H1 (cell line): ENCODE measurements at regions of chr2 and their contacts with region 1.

Region 1: GRCh38 chr2:104944495-104944894 is 90.6 kb downstream of the POU3F3 start:
- DNase-seq: peak in 1 of 2 experiments; percentile 61
- H3K4me3 ChIP-seq: no peak overlapping the region
- H3K27ac ChIP-seq: no peak overlapping the region
- H3K4me1 ChIP-seq: peaks cover 0 to 3% (median 0%) of the 10 kb centered on the region in 4 experiments; a peak in 1 of 7 replicates
- H3K27me3 ChIP-seq: peaks cover 0 to 1% (median 0%) of the 10 kb centered on the region in 4 experiments; a peak in 1 of 7 replicates
- CTCF ChIP-seq: peak in 2 of 3 experiments; percentile 64 to 74; a peak in 3 of 4 replicates
- EP300 ChIP-seq: no peak
- POLR2A ChIP-seq: no peak
- RAD21 ChIP-seq: peak; percentile 95 to 96

Region 2: GRCh38 chr2:103959174-103960128 is 985.0 kb before region 1 on chr2:
- CTCF ChIA-PET with region 1: interaction called, 10 read pairs
- POLR2A ChIA-PET with region 1: no interaction called
- DNase-seq: peak; percentile 21 to 49
- H3K4me3 ChIP-seq: no peak overlapping the region
- H3K27ac ChIP-seq: no peak overlapping the region
- H3K4me1 ChIP-seq: no peaks in the 10 kb centered on the region
- H3K27me3 ChIP-seq: no peaks in the 10 kb centered on the region
- CTCF ChIP-seq: peak; percentile 74 to 85 (median 77)
- EP300 ChIP-seq: no peak
- POLR2A ChIP-seq: no peak
- RAD21 ChIP-seq: peak; percentile 88 to 91

Region 3: DNA sequence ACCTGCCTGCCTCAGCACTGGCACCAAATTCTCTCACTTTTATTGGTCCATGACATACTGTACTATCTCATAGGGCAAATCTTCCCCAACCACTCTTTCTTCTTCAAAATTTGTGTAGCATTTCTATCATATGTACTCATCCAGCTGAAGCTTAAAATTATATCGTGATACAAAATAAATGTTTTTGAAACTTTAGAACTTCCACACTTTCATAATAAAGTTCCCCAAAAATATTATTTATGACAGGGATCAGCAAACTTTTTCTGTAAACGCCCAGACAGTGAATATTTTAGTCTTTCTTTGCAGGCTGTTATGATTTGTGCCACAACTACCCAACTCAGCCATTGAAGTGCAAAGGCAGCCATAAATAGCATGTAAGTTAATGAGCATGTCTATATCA is 166.8 kb before region 1 on chr2:
- CTCF ChIA-PET with region 1: no interaction called
- POLR2A ChIA-PET with region 1: no interaction called
- DNase-seq: no peak
- H3K4me3 ChIP-seq: no peak overlapping the region
- H3K27ac ChIP-seq: no peak overlapping the region
- H3K4me1 ChIP-seq: no peaks in the 10 kb centered on the region
- H3K27me3 ChIP-seq: no peaks in the 10 kb centered on the region
- CTCF ChIP-seq: no peak
- EP300 ChIP-seq: no peak
- POLR2A ChIP-seq: no peak
- RAD21 ChIP-seq: no peak

Region 4: GRCh38 chr2:104872866-104873688 is 71.4 kb before region 1 on chr2:
- CTCF ChIA-PET with region 1: interaction called, 38 read pairs
- POLR2A ChIA-PET with region 1: no interaction called
- DNase-seq: peak in 1 of 2 experiments; percentile 88
- H3K4me3 ChIP-seq: peak overlapping the region; percentile 48 to 75 (median 56)
- H3K27ac ChIP-seq: no peak overlapping the region
- H3K4me1 ChIP-seq: peaks cover 0 to 13% (median 4%) of the 10 kb centered on the region in 4 experiments; a peak in 5 of 7 replicates
- H3K27me3 ChIP-seq: peaks cover 43 to 80% (median 67%) of the 10 kb centered on the region in 4 experiments
- CTCF ChIP-seq: peak; percentile 62 to 76 (median 70)
- EP300 ChIP-seq: no peak
- POLR2A ChIP-seq: no peak
- RAD21 ChIP-seq: peak; percentile 76 to 80

Region 5: GRCh38 chr2:104965900-104966299 is 21.4 kb after region 1 on chr2:
- CTCF ChIA-PET with region 1: interaction called, 10 read pairs
- POLR2A ChIA-PET with region 1: no interaction called
- DNase-seq: no peak
- H3K4me3 ChIP-seq: no peak overlapping the region
- H3K27ac ChIP-seq: no peak overlapping the region
- H3K4me1 ChIP-seq: peaks cover 0 to 7% (median 2%) of the 10 kb centered on the region in 4 experiments; a peak in 5 of 7 replicates
- H3K27me3 ChIP-seq: no peaks in the 10 kb centered on the region
- CTCF ChIP-seq: peak in 1 of 3 experiments; percentile 59; a peak in 2 of 4 replicates
- EP300 ChIP-seq: no peak
- POLR2A ChIP-seq: no peak
- RAD21 ChIP-seq: peak; percentile 24 to 38; a peak in 3 of 4 replicates

Region 6: DNA sequence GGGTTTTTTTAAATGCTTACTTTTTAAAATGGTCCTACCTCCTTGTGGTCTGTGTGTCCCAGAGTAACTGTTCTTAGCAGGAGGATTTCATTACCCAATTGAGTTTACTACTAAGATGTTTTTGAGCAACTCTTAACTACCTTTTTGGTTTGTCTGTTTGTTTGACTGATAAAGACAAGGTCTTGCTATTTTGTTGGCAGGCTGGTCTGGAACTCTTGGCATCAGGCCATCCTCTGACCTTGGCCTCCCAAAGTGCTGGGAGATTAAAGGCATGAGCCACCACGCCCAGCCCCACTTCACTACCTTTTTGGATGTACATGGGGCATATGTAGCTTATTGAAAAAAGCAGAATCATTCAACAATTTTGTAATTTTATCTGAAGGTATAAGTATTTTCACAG is 108.3 kb after region 1 on chr2:
- CTCF ChIA-PET with region 1: no interaction called
- POLR2A ChIA-PET with region 1: no interaction called
- DNase-seq: no peak
- H3K4me3 ChIP-seq: no peak overlapping the region
- H3K27ac ChIP-seq: no peak overlapping the region
- H3K4me1 ChIP-seq: no peaks in the 10 kb centered on the region
- H3K27me3 ChIP-seq: no peaks in the 10 kb centered on the region
- CTCF ChIP-seq: no peak
- EP300 ChIP-seq: no peak
- POLR2A ChIP-seq: no peak
- RAD21 ChIP-seq: no peak

Region 7: GRCh38 chr2:105072039-105072438 is 127.5 kb after region 1 on chr2:
- CTCF ChIA-PET with region 1: no interaction called
- POLR2A ChIA-PET with region 1: no interaction called
- DNase-seq: no peak
- H3K4me3 ChIP-seq: no peak overlapping the region
- H3K27ac ChIP-seq: no peak overlapping the region
- H3K4me1 ChIP-seq: peaks cover 1 to 5% (median 3%) of the 10 kb centered on the region in 4 experiments; a peak in 2 of 7 replicates
- H3K27me3 ChIP-seq: no peaks in the 10 kb centered on the region
- CTCF ChIP-seq: no peak
- EP300 ChIP-seq: no peak
- POLR2A ChIP-seq: no peak
- RAD21 ChIP-seq: no peak